ENCODE measurements at regions of chr2 and their contacts with region 1.

Region 1: DNA sequence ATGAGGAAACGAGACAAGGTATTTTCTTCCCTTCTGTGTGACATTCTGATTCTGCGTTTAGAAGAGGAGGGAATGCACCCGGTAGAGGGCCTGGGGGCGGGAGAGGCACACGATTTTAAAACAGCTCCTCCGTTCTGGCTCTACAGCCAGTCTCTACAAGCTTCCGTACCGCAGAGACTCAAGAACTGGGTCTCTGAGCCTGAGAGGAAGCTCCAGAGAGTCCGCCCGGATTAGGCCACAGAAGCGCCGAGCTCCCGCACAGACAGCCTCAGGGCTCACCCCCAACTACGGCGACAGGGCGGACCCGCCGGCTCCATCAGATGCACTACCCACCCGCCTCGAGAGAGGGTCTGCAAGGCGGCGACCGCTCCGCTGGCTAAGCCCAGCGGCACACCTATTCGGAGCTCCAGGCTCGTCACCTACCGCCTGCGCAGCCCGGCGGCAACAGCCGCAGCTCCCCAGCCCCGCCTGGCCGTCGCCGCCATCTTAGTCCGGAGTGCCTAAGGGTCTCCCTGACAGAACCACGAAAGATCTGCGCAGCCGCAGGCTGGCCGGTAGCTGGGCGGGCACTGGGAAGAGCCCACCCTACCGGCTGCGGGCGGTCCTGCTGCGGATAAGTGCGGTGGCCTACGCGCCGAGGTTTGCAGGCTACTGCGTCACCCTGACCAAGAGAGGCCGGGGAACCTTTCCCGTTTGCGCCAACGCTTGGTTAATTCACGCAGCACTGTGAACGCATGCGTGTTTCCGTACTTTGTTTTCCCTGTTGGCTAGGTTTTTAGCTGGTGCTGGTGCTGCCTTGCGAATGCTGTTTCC is at the start of gene NFU1:
- DNase-seq: peak; percentile 96 to 99
- ATAC-seq: peak; percentile 95 to 99
- H3K4me3 ChIP-seq: peak within 1 kb of the TSS; percentile 56
- H3K27ac ChIP-seq: peak within 1 kb of the TSS; percentile 83 to 95
- H3K4me1 ChIP-seq: peaks cover 17% of the 10 kb centered on the region
- CTCF ChIP-seq: no peak; the same call in 1 of the 3 replicates
- EP300 ChIP-seq: no peak
- POLR2A ChIP-seq: peak; percentile 91
- RAD21 ChIP-seq: peak in 1 of 2 experiments; percentile 7; a peak in 4 of 5 replicates
- polyA plus RNA-seq, gene NFU1: 67.9 and 99.2 TPM in 2 replicates

Region 2: GRCh38 chr2:69455739-69456138 is 18.6 kb after region 1 on chr2:
- CTCF ChIA-PET with region 1: interaction called, 7 read pairs
- POLR2A ChIA-PET with region 1: interaction called, 13 read pairs
- DNase-seq: no peak
- ATAC-seq: no peak
- H3K4me3 ChIP-seq: no peak overlapping the region
- H3K27ac ChIP-seq: no peak overlapping the region
- H3K4me1 ChIP-seq: no peaks in the 10 kb centered on the region
- CTCF ChIP-seq: no peak
- EP300 ChIP-seq: no peak
- POLR2A ChIP-seq: no peak
- RAD21 ChIP-seq: no peak

Region 3: GRCh38 chr2:69643602-69644505 is 206.7 kb after region 1 on chr2 and contains the start of gene AAK1:
- CTCF ChIA-PET with region 1: no interaction called
- POLR2A ChIA-PET with region 1: interaction called, 10 read pairs
- DNase-seq: peak; percentile 91 to 94
- ATAC-seq: peak; percentile 88 to 91
- H3K4me3 ChIP-seq: peak within 1 kb of the TSS; percentile 88
- H3K27ac ChIP-seq: peak within 1 kb of the TSS; percentile 94 to 98
- H3K4me1 ChIP-seq: peaks cover 38% of the 10 kb centered on the region
- CTCF ChIP-seq: peak; percentile 27; the same call in 1 of the 3 replicates
- EP300 ChIP-seq: no peak
- POLR2A ChIP-seq: peak; percentile 69
- RAD21 ChIP-seq: peak in 1 of 2 experiments; percentile 2; a peak in 2 of 5 replicates
- polyA plus RNA-seq, gene AAK1: 25.7 and 26.9 TPM in 2 replicates